ENCODE measurements at regions of chr15 and their contacts with region 1.

Region 1: GRCh38 chr15:88727439-88727838 is 75.8 kb upstream of the ACAN start:
- DNase-seq: no peak

Region 2: GRCh38 chr15:88664151-88664778 is 63.2 kb before region 1 on chr15:
- in situ Hi-C with region 1: loop called (anchors 10 kb)
- DNase-seq: peak; percentile 51